GM10248 (cell line): ENCODE measurements at regions of chr1 and their contacts with region 1.

Region 1: DNA sequence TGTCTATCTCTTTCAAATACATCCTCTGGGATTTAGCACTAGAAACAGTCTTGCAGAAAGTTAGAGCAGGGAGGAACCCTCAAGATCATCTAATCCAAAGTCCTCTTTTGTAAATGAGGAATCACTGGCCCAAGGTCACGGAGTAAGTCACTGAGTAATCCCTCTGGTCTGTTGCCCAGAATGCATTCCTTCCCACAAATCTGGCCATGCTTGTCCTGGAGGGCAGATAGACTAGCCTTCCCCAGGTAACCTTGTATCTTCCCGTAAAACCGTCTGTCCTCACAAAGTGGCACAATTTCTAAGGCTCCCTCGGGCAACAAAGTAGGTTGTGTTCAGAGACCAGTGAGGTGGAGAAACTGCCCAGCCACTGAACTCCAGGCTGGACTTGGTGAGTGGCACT is 46.2 kb downstream of the DDR2 start:
- DNase-seq: no peak
- CTCF ChIP-seq: no peak

Region 2: GRCh38 chr1:162633081-162633762 is 45.2 kb before region 1 on chr1:
- CTCF ChIA-PET with region 1: interaction called, 10 read pairs
- POLR2A ChIA-PET with region 1: no interaction called
- DNase-seq: peak; percentile 23
- CTCF ChIP-seq: no peak

Region 3: DNA sequence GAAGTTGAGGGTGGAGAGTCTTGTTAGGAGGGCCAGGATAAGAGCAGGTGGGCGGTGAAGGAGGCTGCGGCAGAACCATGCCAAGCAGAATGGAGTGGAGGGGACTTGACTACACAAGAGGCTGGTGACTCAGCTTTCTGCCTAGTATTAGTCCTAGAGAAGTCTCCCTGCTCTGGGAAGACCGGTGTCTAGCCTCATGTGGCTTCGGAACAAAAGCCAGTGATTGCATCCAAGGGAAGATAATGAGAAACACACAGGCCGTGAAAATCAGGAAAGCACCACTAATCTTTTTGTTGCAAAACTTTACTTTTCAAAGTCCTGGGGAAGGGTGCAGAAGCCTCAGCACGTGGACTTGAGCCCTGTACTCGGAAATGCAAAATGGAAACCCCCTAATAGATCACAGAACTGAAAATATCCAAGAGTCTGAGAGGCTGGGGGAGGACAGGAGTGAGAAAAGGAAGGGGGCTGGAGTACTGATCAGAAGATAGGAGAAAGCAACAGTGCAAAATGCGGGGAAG is 14.8 kb before region 1 on chr1:
- CTCF ChIA-PET with region 1: interaction called, 22 read pairs
- POLR2A ChIA-PET with region 1: no interaction called
- DNase-seq: no peak
- CTCF ChIP-seq: no peak

Region 4: GRCh38 chr1:162690672-162691434 is 12.4 kb after region 1 on chr1:
- CTCF ChIA-PET with region 1: interaction called, 25 read pairs
- POLR2A ChIA-PET with region 1: no interaction called
- DNase-seq: no peak
- CTCF ChIP-seq: no peak

Region 5: DNA sequence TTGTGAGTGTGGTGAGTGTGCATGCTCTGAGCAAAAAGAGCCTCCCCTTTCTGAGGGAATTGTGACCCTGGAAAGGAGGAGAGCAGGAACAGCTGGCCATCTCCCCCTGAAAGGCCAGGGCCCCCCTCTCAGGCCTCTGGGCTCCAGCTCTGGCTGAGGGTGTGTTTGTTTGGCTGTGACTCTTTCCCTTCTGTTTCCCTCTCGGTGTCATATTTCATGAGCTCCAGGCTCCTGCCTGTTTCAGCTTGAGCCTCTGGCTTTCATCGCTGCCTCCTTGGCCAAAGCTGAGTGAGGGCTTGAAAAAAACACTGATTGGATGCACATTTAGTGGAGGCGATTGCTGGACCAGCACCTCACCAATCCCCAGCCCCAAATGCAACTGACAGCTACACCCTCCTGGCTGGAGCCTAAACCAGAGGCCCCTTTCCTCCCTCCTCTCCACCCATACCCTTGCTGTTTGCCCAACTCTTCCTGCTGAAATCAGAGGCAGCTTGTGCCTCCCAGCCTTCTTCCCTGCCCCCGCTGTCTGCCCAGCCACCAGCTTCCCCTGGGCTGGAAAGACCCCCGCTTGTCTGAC is 17.9 kb after region 1 on chr1:
- CTCF ChIA-PET with region 1: interaction called, 25 read pairs
- POLR2A ChIA-PET with region 1: no interaction called
- DNase-seq: no peak
- CTCF ChIP-seq: no peak